Activated CD4-positive, alpha-beta T cell treated with anti-CD3 and anti-CD28 coated beads for 36 hours (primary cell): ENCODE measurements at regions of chr11 and their contacts with region 1.

Region 1: DNA sequence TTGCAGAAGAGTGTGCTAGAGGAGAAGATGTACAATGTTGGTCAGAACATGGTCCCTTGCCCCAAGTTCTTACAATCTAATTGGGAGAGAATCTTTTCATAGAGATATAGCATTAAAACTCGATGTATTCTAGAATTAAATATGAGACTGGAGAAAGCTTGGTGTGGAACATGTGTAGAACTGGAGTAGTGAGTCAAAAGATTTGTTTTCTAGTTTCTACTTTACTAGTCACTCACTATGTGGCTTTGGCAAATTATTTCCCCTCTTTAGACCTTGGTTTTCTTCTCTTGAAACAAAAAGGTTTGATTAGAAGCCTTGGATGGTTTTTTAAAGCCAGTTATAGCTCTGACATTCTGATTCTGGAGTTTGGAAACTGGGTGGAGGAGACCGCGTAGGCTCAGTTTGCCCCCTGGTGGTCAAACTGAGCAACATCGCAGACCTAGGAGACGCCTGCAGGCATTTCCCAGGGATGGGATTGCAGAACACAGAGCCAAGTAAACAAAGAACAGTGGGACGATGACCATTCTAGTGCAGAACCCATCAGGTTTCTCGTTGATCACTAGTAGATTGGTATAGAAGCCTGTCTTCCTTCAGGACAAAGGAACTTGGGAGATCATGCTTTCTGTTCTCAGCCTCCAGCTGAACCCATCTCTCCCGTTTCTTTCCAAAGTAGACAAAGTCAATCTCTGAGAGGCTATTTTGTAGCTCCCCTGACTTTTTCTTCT is 8.5 kb upstream of the CHRDL2 start:
- DNase-seq: peak; percentile 64
- ATAC-seq: peak; percentile 92
- H3K4me3 Mint-ChIP-seq: no peak overlapping the region
- H3K27ac Mint-ChIP-seq: no peak overlapping the region
- H3K4me1 Mint-ChIP-seq: peaks cover 12% of the 10 kb centered on the region
- H3K27me3 Mint-ChIP-seq: peaks cover 26% of the 10 kb centered on the region

Region 2: GRCh38 chr11:74154621-74155281 is 585.0 kb before region 1 on chr11:
- CTCF ChIA-PET with region 1: no interaction called
- POLR2A ChIA-PET with region 1: interaction called, 11 read pairs
- intact Hi-C with region 1: no loop called
- DNase-seq: no peak
- ATAC-seq: no peak
- H3K4me3 Mint-ChIP-seq: no peak overlapping the region
- H3K27ac Mint-ChIP-seq: no peak overlapping the region
- H3K4me1 Mint-ChIP-seq: no peaks in the 10 kb centered on the region
- H3K27me3 Mint-ChIP-seq: no peaks in the 10 kb centered on the region

Region 3: GRCh38 chr11:74726547-74727182 is 13.0 kb before region 1 on chr11:
- CTCF ChIA-PET with region 1: interaction called, 17 read pairs
- POLR2A ChIA-PET with region 1: no interaction called
- intact Hi-C with region 1: no loop called
- DNase-seq: peak; percentile 78
- ATAC-seq: peak; percentile 96
- H3K4me3 Mint-ChIP-seq: no peak overlapping the region
- H3K27ac Mint-ChIP-seq: no peak overlapping the region
- H3K4me1 Mint-ChIP-seq: peaks cover 5% of the 10 kb centered on the region
- H3K27me3 Mint-ChIP-seq: peaks cover 34% of the 10 kb centered on the region

Region 4: GRCh38 chr11:75055471-75055870 is 315.8 kb after region 1 on chr11:
- CTCF ChIA-PET with region 1: no interaction called
- POLR2A ChIA-PET with region 1: no interaction called
- intact Hi-C with region 1: no loop called
- DNase-seq: no peak
- ATAC-seq: no peak
- H3K4me3 Mint-ChIP-seq: no peak overlapping the region
- H3K27ac Mint-ChIP-seq: no peak overlapping the region
- H3K4me1 Mint-ChIP-seq: no peaks in the 10 kb centered on the region
- H3K27me3 Mint-ChIP-seq: peaks cover 11% of the 10 kb centered on the region

Region 5: GRCh38 chr11:76062733-76063132 is 1323.0 kb after region 1 on chr11:
- CTCF ChIA-PET with region 1: no interaction called
- POLR2A ChIA-PET with region 1: no interaction called
- intact Hi-C with region 1: no loop called
- DNase-seq: no peak
- ATAC-seq: no peak
- H3K4me3 Mint-ChIP-seq: no peak overlapping the region
- H3K27ac Mint-ChIP-seq: no peak overlapping the region
- H3K4me1 Mint-ChIP-seq: no peaks in the 10 kb centered on the region
- H3K27me3 Mint-ChIP-seq: no peaks in the 10 kb centered on the region